Caco-2 (cell line): ENCODE measurements at regions of chr15 and their contacts with region 1.

Region 1: DNA sequence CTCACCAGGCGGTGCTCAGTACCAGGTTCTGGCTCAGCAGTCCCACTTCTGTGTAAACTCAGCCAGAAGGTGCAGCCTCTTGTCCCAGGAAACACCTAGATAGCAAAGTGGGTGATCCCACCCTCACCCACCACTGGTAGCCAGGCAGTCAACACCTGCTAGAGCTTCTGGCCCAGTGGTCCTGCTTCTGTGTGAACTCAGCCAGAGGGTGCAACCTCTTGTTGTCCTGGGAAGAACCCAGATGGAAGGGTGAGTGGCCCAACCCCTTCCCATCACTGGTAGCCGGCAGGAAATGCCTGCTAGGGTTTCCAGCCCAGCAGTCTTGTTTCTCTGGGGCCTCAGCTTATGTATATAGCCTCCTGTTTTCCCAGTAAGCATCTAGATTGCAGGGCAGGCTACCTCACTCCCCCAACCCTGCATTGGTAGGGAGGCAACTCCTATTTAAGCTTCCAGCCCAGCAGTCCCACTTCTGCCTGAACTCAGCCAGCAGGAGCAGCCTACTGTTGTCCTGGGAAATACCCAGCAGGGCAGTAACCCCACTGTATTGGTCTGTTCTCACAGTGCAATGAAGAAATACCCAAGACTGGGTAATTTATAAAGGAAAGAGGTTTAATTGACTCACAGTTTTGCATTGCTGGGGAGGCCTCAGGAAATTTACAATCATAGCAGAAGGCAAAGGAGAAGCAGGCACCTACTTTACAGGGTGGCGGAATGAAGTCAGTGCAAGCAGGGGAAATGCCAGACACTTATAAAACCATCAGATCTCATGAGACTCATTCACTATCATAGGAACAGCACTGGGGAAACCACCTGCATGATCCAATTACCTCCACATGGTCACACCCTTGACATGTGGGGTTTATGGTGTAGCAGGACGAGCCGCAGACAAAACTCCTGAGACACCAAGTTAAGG is 110.6 kb downstream of the DTWD1 start:
- DNase-seq: no peak
- H3K4me3 ChIP-seq: no peak overlapping the region
- H3K4me3 Mint-ChIP-seq: peak overlapping the region; percentile 30
- H3K27ac Mint-ChIP-seq: peak overlapping the region; percentile 25
- H3K4me1 ChIP-seq: peaks cover 33% of the 10 kb centered on the region
- H3K4me1 Mint-ChIP-seq: peaks cover 26% of the 10 kb centered on the region
- H3K27me3 ChIP-seq: no peaks in the 10 kb centered on the region
- H3K27me3 Mint-ChIP-seq: no peaks in the 10 kb centered on the region
- CTCF ChIP-seq: no peak

Region 2: DNA sequence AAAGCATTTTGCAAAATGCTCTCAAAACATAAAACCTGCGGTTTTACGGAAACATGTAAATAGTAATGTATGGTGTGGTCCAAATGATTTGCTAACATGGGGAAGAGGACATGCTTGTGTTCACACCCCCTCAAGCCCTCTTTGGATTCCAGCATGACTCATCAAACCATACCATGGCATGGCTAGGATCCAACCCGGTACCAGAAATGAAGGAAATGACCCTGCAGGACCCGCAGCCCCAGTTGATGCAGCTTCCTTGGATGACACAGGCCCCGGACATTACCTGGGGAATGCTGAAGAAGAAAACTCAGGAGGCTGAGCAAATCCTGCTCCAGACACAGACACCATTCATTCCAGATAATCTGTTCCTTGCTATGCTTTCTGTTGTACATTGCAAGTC is 112.3 kb after region 1 on chr15:
- CTCF ChIA-PET with region 1: no interaction called
- POLR2A ChIA-PET with region 1: no interaction called
- intact Hi-C with region 1: loop called (anchors 5 kb)
- DNase-seq: no peak
- H3K4me3 ChIP-seq: no peak overlapping the region
- H3K4me3 Mint-ChIP-seq: no peak overlapping the region
- H3K27ac Mint-ChIP-seq: no peak overlapping the region
- H3K4me1 ChIP-seq: peaks cover 18% of the 10 kb centered on the region
- H3K4me1 Mint-ChIP-seq: peaks cover 17% of the 10 kb centered on the region
- H3K27me3 ChIP-seq: no peaks in the 10 kb centered on the region
- H3K27me3 Mint-ChIP-seq: no peaks in the 10 kb centered on the region
- CTCF ChIP-seq: no peak

Region 3: GRCh38 chr15:49918121-49918520 is 186.7 kb after region 1 on chr15:
- CTCF ChIA-PET with region 1: no interaction called
- POLR2A ChIA-PET with region 1: no interaction called
- intact Hi-C with region 1: no loop called
- DNase-seq: no peak
- H3K4me3 ChIP-seq: no peak overlapping the region
- H3K4me3 Mint-ChIP-seq: no peak overlapping the region
- H3K27ac Mint-ChIP-seq: no peak overlapping the region
- H3K4me1 ChIP-seq: no peaks in the 10 kb centered on the region
- H3K4me1 Mint-ChIP-seq: no peaks in the 10 kb centered on the region
- H3K27me3 ChIP-seq: no peaks in the 10 kb centered on the region
- H3K27me3 Mint-ChIP-seq: peaks cover 6% of the 10 kb centered on the region
- CTCF ChIP-seq: no peak